Activated naive CD4-positive, alpha-beta T cell treated with anti-CD3 and anti-CD28 coated beads for 36 hours (primary cell): ENCODE measurements at regions of chr3 and their contacts with region 1.

Region 1: GRCh38 chr3:71978150-71978721 is 193.3 kb upstream of the PROK2 start:
- DNase-seq: peak; percentile 76
- H3K4me3 Mint-ChIP-seq: no peak overlapping the region
- H3K27ac Mint-ChIP-seq: peak overlapping the region; percentile 82
- H3K4me1 Mint-ChIP-seq: peaks cover 33% of the 10 kb centered on the region
- H3K27me3 Mint-ChIP-seq: peaks cover 18% of the 10 kb centered on the region

Region 2: DNA sequence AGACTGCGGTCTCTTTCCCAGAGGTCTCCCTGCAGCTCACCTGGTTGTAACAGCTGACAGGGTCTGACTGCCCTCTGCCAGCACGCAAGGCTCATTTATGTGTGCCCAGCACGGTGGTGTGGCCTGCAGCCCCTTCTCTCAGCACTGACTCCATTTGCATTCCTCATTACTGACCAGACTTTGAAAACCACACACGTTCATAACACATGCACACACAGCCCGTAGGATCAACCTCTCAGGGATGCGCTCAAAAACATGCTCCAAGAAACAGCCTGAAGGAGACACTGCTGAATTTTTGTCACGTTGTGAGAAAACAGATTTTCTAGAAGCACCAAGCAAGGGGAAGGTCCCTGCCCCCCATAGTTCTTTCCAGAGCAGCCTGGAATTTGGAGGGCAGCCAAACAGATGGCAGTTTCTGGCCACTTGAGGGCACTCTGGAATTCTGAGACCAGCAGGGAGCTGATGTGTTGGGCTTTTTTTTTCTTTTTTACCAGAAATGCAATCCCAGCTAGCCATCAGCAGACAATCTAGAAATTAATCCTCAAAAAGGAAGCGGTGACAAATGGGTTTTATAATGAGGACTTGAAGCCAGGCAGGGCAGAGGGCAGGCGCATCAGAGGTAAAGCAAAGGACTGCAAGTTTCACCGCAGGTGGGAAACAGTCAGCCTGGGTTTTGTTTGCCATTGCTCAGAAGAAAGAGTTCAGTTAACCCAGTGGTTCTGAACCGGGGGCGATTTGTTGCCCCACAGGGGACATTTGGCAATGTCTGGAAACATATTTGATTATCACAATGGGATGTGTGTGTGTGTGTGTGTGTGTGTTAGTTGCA is 22.8 kb before region 1 on chr3:
- CTCF ChIA-PET with region 1: interaction called, 13 read pairs
- intact Hi-C with region 1: loop called (anchors 1 kb)
- DNase-seq: peak; percentile 76
- H3K4me3 Mint-ChIP-seq: no peak overlapping the region
- H3K27ac Mint-ChIP-seq: peak overlapping the region; percentile 1
- H3K4me1 Mint-ChIP-seq: peaks cover 27% of the 10 kb centered on the region
- H3K27me3 Mint-ChIP-seq: no peaks in the 10 kb centered on the region

Region 3: GRCh38 chr3:72080095-72080494 is 101.9 kb after region 1 on chr3:
- CTCF ChIA-PET with region 1: no interaction called
- intact Hi-C with region 1: loop called (anchors 1 kb)
- DNase-seq: no peak
- H3K4me3 Mint-ChIP-seq: no peak overlapping the region
- H3K27ac Mint-ChIP-seq: no peak overlapping the region
- H3K4me1 Mint-ChIP-seq: peaks cover 29% of the 10 kb centered on the region
- H3K27me3 Mint-ChIP-seq: peaks cover 3% of the 10 kb centered on the region

Region 4: DNA sequence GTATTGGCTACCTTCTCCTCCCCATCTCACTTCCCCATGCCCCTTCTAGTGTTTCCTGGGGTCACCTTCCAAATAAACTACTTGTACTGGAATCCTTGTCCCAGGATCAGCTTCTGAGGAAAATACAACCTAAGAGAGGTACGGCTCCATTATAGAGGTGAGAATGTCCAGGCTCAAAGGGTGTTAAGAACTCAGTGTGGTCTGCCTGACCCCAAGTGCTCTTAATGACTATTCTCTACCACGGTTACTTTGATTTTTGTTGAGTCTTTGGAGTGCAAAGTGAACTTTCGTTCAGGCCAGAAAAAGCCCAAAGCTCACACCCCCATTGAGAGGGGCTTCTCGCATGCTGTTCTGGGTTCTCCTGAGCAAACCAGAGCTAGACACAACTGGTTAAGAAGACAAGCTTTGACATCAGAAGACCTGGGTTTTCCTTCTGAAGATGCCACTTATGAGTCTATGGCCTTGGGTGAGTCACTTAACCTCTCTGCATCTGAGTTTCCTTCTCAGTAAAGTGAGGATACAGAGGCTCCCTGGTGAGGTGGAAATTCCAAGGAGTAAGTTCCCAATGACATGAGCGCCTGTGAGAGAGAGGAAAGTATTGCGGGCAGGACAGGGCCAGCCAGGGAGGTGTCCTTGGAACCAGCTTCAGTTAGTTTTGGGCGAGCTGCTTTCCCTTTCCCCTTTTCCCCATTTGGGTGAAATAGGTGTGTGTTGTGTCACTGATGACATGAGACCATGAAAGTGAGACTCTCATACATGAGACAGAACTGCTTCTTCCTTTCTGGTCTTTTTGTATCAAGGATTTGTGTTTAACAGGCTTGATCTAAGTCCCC is 281.7 kb after region 1 on chr3:
- CTCF ChIA-PET with region 1: interaction called, 3 read pairs
- intact Hi-C with region 1: loop called (anchors 1 kb)
- DNase-seq: peak; percentile 46
- H3K4me3 Mint-ChIP-seq: no peak overlapping the region
- H3K27ac Mint-ChIP-seq: peak overlapping the region; percentile 82
- H3K4me1 Mint-ChIP-seq: peaks cover 58% of the 10 kb centered on the region
- H3K27me3 Mint-ChIP-seq: no peaks in the 10 kb centered on the region

Region 5: GRCh38 chr3:72418244-72418643 is 440.0 kb after region 1 on chr3:
- CTCF ChIA-PET with region 1: no interaction called
- intact Hi-C with region 1: loop called (anchors 1 kb)
- DNase-seq: no peak
- H3K4me3 Mint-ChIP-seq: no peak overlapping the region
- H3K27ac Mint-ChIP-seq: no peak overlapping the region
- H3K4me1 Mint-ChIP-seq: peaks cover 59% of the 10 kb centered on the region
- H3K27me3 Mint-ChIP-seq: no peaks in the 10 kb centered on the region

Region 6: DNA sequence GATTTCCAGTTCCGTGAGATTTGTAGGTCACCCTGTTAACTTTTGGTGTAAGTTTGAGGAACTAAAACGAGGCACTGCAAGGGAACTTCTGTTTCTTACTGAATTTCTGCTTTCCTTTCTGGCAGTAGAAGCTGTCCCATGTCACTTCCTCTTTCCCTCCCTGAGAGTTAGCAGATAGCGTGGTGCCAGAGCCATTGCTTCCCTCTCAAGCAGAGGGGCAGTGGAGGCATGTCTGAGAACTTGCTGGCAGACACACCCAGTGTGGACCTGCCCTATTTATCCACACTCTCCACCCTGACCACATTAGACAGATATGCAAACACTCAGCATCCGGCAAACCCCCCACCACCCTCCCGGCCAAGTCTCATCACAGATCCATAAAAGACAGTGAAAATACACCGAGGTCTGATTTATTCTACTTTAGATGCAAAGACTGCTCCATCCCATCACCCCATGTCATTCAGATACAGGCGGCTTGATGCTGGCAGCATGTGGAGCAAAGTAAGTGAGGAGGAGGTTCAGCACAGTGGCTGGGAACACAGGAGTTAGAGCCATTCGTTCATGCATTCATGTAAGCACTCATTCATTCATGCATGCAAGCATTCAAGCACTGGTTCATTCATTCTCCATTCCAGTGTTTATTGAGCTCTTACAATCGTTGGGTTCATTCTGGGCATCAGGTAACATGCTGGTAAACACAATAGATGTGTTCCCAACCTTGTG is 545.4 kb after region 1 on chr3:
- CTCF ChIA-PET with region 1: no interaction called
- intact Hi-C with region 1: loop called (anchors 1 kb)
- DNase-seq: peak; percentile 30
- H3K4me3 Mint-ChIP-seq: no peak overlapping the region
- H3K27ac Mint-ChIP-seq: no peak overlapping the region
- H3K4me1 Mint-ChIP-seq: peaks cover 44% of the 10 kb centered on the region
- H3K27me3 Mint-ChIP-seq: peaks cover 2% of the 10 kb centered on the region